ENCODE measurements at regions of chr1 and their contacts with region 1.

Region 1: GRCh38 chr1:12124693-12125421 is 41.9 kb upstream of the TNFRSF1B start:
- DNase-seq: peak; percentile 68 to 82 (median 77)
- H3K4me3 ChIP-seq: peak overlapping the region in 1 of 3 experiments; percentile 71
- H3K4me3 Mint-ChIP-seq: peak overlapping the region; percentile 16 to 17
- H3K27ac ChIP-seq: peak overlapping the region; percentile 58 to 88
- H3K27ac Mint-ChIP-seq: peak overlapping the region; percentile 80 to 98 (median 91)
- H3K4me1 ChIP-seq: peaks cover 39% of the 10 kb centered on the region in 2 donors
- H3K4me1 Mint-ChIP-seq: peaks cover 43% of the 10 kb centered on the region
- H3K27me3 ChIP-seq: no peaks in the 10 kb centered on the region
- H3K27me3 Mint-ChIP-seq: peaks cover 0 to 8% (median 7%) of the 10 kb centered on the region in 3 donors
- CTCF ChIP-seq: peak; percentile 93

Region 2: GRCh38 chr1:12166834-12167492 is 42.1 kb after region 1 on chr1 and contains the start of gene TNFRSF1B:
- intact Hi-C with region 1: loop called (anchors 5 kb)
- DNase-seq: peak; percentile 75 to 88 (median 81)
- H3K4me3 ChIP-seq: peak within 1 kb of the TSS; percentile 89 to 98 (median 98)
- H3K4me3 Mint-ChIP-seq: peak within 1 kb of the TSS; percentile 100
- H3K27ac ChIP-seq: peak within 1 kb of the TSS; percentile 87 to 88
- H3K27ac Mint-ChIP-seq: peak within 1 kb of the TSS; percentile 97 to 100 (median 99)
- H3K4me1 ChIP-seq: peaks cover 81 to 85% of the 10 kb centered on the region in 2 donors
- H3K4me1 Mint-ChIP-seq: peaks cover 78% of the 10 kb centered on the region
- H3K27me3 ChIP-seq: no peaks in the 10 kb centered on the region
- H3K27me3 Mint-ChIP-seq: peaks cover 0 to 4% (median 3%) of the 10 kb centered on the region in 3 donors
- CTCF ChIP-seq: no peak
- polyA plus RNA-seq, gene TNFRSF1B: 436 to 761 (median 450) TPM

Region 3: GRCh38 chr1:12208764-12209494 is 84.1 kb after region 1 on chr1:
- intact Hi-C with region 1: loop called (anchors 1 to 5 kb)
- DNase-seq: peak; percentile 72 to 78 (median 73)
- H3K4me3 ChIP-seq: no peak overlapping the region
- H3K4me3 Mint-ChIP-seq: no peak overlapping the region
- H3K27ac ChIP-seq: peak overlapping the region; percentile 8 to 27
- H3K27ac Mint-ChIP-seq: peak overlapping the region in 5 of 7 donors; percentile 52 to 78 (median 74)
- H3K4me1 ChIP-seq: peaks cover 0 to 12% of the 10 kb centered on the region in 2 donors
- H3K4me1 Mint-ChIP-seq: peaks cover 29% of the 10 kb centered on the region
- H3K27me3 ChIP-seq: no peaks in the 10 kb centered on the region
- H3K27me3 Mint-ChIP-seq: peaks cover 0 to 3% (median 3%) of the 10 kb centered on the region in 3 donors
- CTCF ChIP-seq: peak; percentile 95